ENCODE measurements at regions of chr3 and their contacts with region 1.

Region 1: GRCh38 chr3:55485211-55485791 is 1.8 kb downstream of the WNT5A start:
- DNase-seq: peak; percentile 82
- ATAC-seq: peak; percentile 33
- H3K4me3 ChIP-seq: peak overlapping the region; percentile 90
- H3K27ac ChIP-seq: peak overlapping the region; percentile 84
- H3K4me1 ChIP-seq: peaks cover 24% of the 10 kb centered on the region
- H3K27me3 ChIP-seq: no peaks in the 10 kb centered on the region
- CTCF ChIP-seq: peak; percentile 46

Region 2: GRCh38 chr3:55059027-55059629 is 426.2 kb before region 1 on chr3:
- CTCF ChIA-PET with region 1: no interaction called
- POLR2A ChIA-PET with region 1: no interaction called
- intact Hi-C with region 1: no loop called
- DNase-seq: no peak
- ATAC-seq: no peak
- H3K4me3 ChIP-seq: no peak overlapping the region
- H3K27ac ChIP-seq: no peak overlapping the region
- H3K4me1 ChIP-seq: no peaks in the 10 kb centered on the region
- H3K27me3 ChIP-seq: peaks cover 10% of the 10 kb centered on the region; the same call in 1 of the 2 replicates
- CTCF ChIP-seq: no peak

Region 3: GRCh38 chr3:55369441-55369840 is 115.9 kb before region 1 on chr3:
- CTCF ChIA-PET with region 1: no interaction called
- POLR2A ChIA-PET with region 1: no interaction called
- intact Hi-C with region 1: no loop called
- DNase-seq: no peak
- ATAC-seq: peak; percentile 33; the same call in 1 of the 2 replicates
- H3K4me3 ChIP-seq: no peak overlapping the region
- H3K27ac ChIP-seq: no peak overlapping the region
- H3K4me1 ChIP-seq: no peaks in the 10 kb centered on the region
- H3K27me3 ChIP-seq: no peaks in the 10 kb centered on the region
- CTCF ChIP-seq: no peak

Region 4: GRCh38 chr3:55434789-55435188 is 50.5 kb before region 1 on chr3:
- CTCF ChIA-PET with region 1: no interaction called
- POLR2A ChIA-PET with region 1: no interaction called
- intact Hi-C with region 1: loop called (anchors 2 kb)
- DNase-seq: peak; percentile 73
- ATAC-seq: peak; percentile 74
- H3K4me3 ChIP-seq: no peak overlapping the region
- H3K27ac ChIP-seq: no peak overlapping the region
- H3K4me1 ChIP-seq: no peaks in the 10 kb centered on the region
- H3K27me3 ChIP-seq: no peaks in the 10 kb centered on the region
- CTCF ChIP-seq: peak; percentile 83

Region 5: DNA sequence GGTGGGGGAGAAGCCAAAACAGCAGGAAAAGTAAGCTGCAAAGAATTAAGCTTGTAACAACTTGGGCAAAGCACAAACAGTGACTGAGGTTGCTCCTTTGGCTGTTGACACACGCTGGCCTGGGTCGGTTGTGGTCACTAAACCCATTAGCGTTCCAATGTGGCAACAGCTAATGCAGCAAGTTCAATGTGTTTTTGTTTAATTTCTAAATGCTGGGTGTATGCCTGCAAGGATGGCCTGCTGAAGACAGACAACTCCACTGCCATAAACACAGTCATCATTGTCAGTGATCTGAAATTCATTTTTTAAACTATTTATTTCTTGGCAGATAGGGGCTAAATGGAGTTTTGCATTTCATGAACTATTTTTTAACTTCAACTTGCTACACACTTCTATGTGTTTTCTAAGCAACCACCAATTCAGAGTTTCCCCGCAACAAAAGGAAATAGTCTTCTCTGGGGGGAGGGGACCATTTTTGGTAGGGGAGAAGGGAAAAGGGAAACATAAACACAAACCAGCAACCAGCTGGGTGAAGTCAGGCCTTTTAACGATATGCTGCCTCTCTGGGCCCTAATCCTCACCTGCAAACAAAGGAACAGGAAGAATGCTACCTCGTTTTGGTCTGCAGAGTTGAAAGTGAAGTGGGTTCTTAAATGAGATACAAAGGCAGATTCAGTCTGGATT is 36.6 kb after region 1 on chr3:
- CTCF ChIA-PET with region 1: interaction called, 5 read pairs
- POLR2A ChIA-PET with region 1: no interaction called
- intact Hi-C with region 1: loop called (anchors 1 kb)
- DNase-seq: no peak
- ATAC-seq: no peak
- H3K4me3 ChIP-seq: no peak overlapping the region
- H3K27ac ChIP-seq: no peak overlapping the region
- H3K4me1 ChIP-seq: peaks cover 59% of the 10 kb centered on the region
- H3K27me3 ChIP-seq: no peaks in the 10 kb centered on the region
- CTCF ChIP-seq: no peak

Region 6: GRCh38 chr3:55579496-55579895 is 94.2 kb after region 1 on chr3:
- CTCF ChIA-PET with region 1: no interaction called
- POLR2A ChIA-PET with region 1: no interaction called
- intact Hi-C with region 1: no loop called
- DNase-seq: no peak
- ATAC-seq: no peak
- H3K4me3 ChIP-seq: no peak overlapping the region
- H3K27ac ChIP-seq: no peak overlapping the region
- H3K4me1 ChIP-seq: no peaks in the 10 kb centered on the region
- H3K27me3 ChIP-seq: no peaks in the 10 kb centered on the region
- CTCF ChIP-seq: no peak

Region 7: DNA sequence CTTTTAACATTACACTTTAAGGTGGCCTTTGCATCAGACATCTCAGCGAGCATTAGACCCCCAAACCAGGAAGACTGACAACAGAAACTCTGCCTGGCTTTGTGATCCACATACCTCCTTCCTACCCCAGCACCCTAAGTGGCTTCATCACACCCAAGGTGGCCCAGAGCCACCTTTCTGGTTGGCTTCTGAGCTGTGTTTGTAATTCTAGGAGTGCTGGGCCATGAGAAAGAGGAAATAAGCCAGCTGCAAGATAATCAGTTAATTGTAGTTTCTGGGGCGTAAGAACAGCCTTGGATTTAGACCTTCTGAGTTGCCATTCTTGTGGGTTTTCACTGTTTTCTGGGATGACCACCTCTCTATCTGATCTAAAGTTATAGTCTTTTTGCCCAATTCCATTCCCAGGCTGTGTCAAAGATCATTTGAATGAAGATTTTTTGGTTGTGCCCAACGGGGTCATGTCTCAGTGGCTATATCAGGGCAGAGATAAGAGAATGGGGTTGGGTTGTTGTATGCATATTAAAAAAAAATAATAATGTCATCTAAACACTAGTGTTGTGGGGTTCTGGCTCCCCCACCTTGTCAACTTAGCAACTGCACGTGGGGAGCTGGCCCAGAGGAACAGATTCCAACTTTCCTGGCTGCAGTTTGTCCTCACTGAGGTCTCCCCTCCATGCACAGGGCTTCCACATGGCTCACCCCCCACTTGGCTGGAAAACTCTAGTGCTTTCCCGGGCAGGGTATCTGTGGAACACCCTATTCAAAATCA is 236.6 kb after region 1 on chr3:
- CTCF ChIA-PET with region 1: interaction called, 3 read pairs
- POLR2A ChIA-PET with region 1: no interaction called
- intact Hi-C with region 1: loop called (anchors 1 kb)
- DNase-seq: peak; percentile 56
- ATAC-seq: peak; percentile 64
- H3K4me3 ChIP-seq: no peak overlapping the region
- H3K27ac ChIP-seq: no peak overlapping the region
- H3K4me1 ChIP-seq: no peaks in the 10 kb centered on the region
- H3K27me3 ChIP-seq: no peaks in the 10 kb centered on the region
- CTCF ChIP-seq: peak; percentile 64

Region 8: DNA sequence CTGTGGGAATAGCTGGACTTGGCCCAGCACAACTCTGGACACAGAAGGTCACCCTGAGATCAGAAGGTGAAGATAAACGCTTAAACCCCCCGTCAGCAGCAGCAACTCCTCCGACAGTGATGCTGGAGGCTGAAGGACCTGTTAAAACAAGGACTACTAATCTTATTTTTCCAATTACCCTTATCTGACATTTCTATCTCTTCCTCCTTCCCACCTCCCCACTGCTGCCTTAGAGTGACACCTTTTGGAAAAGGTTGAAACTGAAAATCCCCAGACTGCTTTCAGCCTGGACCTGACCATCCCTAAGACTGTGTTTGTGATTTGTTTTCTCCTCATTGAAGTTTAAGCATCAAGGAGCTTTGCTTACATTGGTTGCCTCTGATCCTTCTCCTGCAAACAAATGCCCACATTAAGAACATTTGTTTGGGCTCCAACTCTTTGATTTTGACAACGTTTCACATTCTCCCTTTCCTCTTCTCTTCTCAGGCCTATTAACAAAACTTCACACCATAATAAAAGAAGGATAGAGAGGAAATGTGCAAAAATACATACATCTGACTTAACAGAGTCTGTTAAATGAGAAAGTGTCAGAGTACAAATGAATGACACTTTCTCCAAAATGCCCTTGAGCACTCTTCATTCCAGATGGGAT is 412.4 kb after region 1 on chr3:
- CTCF ChIA-PET with region 1: no interaction called
- POLR2A ChIA-PET with region 1: no interaction called
- intact Hi-C with region 1: loop called (anchors 1 kb)
- DNase-seq: peak; percentile 72
- ATAC-seq: peak; percentile 76
- H3K4me3 ChIP-seq: no peak overlapping the region
- H3K27ac ChIP-seq: no peak overlapping the region
- H3K4me1 ChIP-seq: peaks cover 16% of the 10 kb centered on the region
- H3K27me3 ChIP-seq: peaks cover 4% of the 10 kb centered on the region; the same call in 1 of the 2 replicates
- CTCF ChIP-seq: peak; percentile 87

Measured in PC-3 (cell line).